ENCODE measurements at regions of chr9 and their contacts with region 1.

Region 1: DNA sequence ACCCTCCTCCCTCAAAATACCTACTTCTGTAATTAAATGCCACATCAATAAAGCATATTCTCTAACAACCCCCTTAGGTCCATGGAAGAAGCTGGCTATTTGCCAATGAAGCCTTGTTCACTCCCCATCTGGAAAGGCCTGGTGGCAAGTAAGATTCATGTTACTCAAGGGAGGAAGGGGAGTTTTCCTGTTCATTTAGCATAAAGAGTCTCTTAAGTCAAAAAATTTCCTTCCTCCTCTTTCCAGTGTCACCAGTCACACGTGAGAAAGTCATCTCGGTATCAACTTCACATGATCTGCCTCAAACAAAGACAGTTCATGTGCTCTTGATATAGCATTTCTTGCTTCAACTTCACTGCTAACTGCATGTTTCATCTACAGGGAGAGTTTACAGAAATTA is 32.7 kb upstream of the RIC1 start:
- DNase-seq: no peak
- H3K4me3 ChIP-seq: no peak overlapping the region
- H3K27ac ChIP-seq: no peak overlapping the region
- H3K4me1 ChIP-seq: peaks cover 0 to 12% (median 6%) of the 10 kb centered on the region in 4 donors
- H3K27me3 ChIP-seq: no peaks in the 10 kb centered on the region
- CTCF ChIP-seq: no peak
- EP300 ChIP-seq: no peak
- POLR2A ChIP-seq: no peak

Region 2: DNA sequence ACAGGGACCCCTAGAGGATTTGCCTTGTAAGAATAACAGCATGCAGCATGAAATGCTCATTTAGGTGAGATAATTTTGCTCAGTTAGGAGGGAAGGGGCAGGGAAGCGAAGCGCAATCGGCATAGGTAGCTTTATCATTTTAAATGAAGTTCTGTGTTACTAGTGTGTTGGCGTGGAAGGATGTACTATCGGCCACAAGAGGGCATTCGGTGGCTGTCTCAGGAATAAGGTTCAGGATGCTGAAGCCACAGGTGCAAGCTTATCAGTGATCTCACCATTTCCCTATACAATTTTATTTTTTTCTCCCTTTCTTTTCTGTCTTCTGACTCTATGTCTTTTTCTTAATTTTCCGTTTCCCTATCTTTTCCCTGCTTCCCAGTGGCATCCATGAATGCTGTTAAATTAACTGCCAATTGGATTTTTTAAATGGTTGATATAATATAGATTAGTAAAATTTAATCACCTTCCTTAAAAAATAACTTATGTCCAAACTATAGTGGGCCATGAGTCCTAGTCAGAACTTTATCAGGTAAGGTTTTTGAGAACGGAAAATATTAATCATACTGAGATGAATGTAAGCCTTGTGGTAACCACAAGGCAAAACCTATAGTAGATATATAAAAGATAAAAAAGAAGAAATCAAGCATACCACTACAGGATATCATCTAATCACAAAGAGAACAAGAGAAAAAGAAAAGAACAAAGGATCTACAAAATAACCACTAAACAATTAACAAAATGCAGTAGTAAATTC is 409.6 kb before region 1 on chr9:
- intact Hi-C with region 1: loop called (anchors 5 kb)
- DNase-seq: no peak
- H3K4me3 ChIP-seq: no peak overlapping the region
- H3K27ac ChIP-seq: no peak overlapping the region
- H3K4me1 ChIP-seq: no peaks in the 10 kb centered on the region
- H3K27me3 ChIP-seq: peaks cover 0 to 8% (median 0%) of the 10 kb centered on the region in 4 donors
- CTCF ChIP-seq: peak; percentile 47 to 58 (median 53)
- EP300 ChIP-seq: no peak
- POLR2A ChIP-seq: no peak